ENCODE measurements at regions of chr15 and their contacts with region 1.

Region 1: GRCh38 chr15:51776952-51777574 is 25.7 kb downstream of the TMOD2 start:
- DNase-seq: peak in 1 of 3 donors; percentile 87
- ATAC-seq: peak; percentile 94
- H3K4me3 ChIP-seq: no peak overlapping the region
- H3K4me1 ChIP-seq: no peaks in the 10 kb centered on the region
- CTCF ChIP-seq: peak; percentile 59

Region 2: DNA sequence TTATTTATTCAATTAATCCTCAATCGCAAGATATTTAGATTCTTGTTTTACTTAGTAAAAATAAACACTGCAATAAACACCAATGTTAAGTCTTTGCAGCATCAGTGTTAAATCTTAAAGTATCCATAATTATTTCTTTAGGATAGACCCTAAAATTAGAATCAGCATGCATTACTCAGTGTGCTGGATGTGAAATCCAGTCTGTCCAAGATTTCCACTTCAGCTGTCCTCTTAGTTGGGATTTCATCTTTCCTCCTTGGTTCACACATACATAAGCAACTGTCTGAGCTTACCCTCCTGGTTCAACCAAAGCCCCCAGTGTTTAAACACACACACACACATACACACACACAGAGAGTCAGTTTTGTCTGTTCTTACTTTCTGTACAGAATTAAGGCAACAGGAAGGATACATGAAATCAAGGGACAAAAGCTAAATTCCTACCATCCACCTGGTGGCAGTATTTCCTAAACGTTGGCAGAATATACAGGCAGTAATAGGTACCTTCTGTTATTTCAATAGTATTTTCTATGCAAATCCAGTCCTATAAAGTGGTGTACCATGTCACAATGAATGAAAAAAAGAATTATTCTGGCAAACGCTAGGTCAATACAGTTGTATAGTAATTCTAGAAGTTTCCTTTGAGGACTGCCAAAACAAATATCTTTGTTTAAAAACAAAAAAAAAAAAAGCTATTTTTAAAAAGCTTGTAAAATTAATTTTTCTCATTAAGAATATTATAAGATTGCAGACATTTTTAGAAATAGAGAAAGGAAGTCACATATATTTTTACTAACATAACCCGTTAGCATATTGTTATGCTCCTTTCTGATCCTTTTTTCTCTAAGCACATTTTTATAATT is 127.2 kb before region 1 on chr15:
- intact Hi-C with region 1: loop called (anchors 1 to 2 kb)
- DNase-seq: peak in 1 of 3 donors; percentile 77
- ATAC-seq: peak; percentile 88
- H3K4me3 ChIP-seq: no peak overlapping the region
- H3K4me1 ChIP-seq: no peaks in the 10 kb centered on the region
- CTCF ChIP-seq: peak; percentile 25